CD4-positive, alpha-beta T cell (primary cell): ENCODE measurements at regions of chr2 and their contacts with region 1.

Region 1: GRCh38 chr2:206392118-206392517 is 51.2 kb upstream of the ADAM23 start:
- DNase-seq: peak in 4 of 14 experiments; percentile 7 to 48 (median 24)
- ATAC-seq: no peak
- H3K4me3 ChIP-seq: no peak overlapping the region
- H3K4me3 Mint-ChIP-seq: no peak overlapping the region
- H3K27ac ChIP-seq: no peak overlapping the region
- H3K27ac Mint-ChIP-seq: no peak overlapping the region
- H3K4me1 ChIP-seq: no peaks in the 10 kb centered on the region
- H3K4me1 Mint-ChIP-seq: no peaks in the 10 kb centered on the region
- H3K27me3 ChIP-seq: no peaks in the 10 kb centered on the region
- H3K27me3 Mint-ChIP-seq: no peaks in the 10 kb centered on the region
- CTCF ChIP-seq: peak; percentile 19

Region 2: GRCh38 chr2:206143451-206143850 is 248.7 kb before region 1 on chr2:
- CTCF ChIA-PET with region 1: no interaction called
- POLR2A ChIA-PET with region 1: no interaction called
- intact Hi-C with region 1: no loop called
- DNase-seq: no peak
- ATAC-seq: no peak
- H3K4me3 ChIP-seq: no peak overlapping the region
- H3K4me3 Mint-ChIP-seq: no peak overlapping the region
- H3K27ac ChIP-seq: no peak overlapping the region
- H3K27ac Mint-ChIP-seq: no peak overlapping the region
- H3K4me1 ChIP-seq: no peaks in the 10 kb centered on the region
- H3K4me1 Mint-ChIP-seq: no peaks in the 10 kb centered on the region
- H3K27me3 ChIP-seq: no peaks in the 10 kb centered on the region
- H3K27me3 Mint-ChIP-seq: no peaks in the 10 kb centered on the region
- CTCF ChIP-seq: no peak

Region 3: DNA sequence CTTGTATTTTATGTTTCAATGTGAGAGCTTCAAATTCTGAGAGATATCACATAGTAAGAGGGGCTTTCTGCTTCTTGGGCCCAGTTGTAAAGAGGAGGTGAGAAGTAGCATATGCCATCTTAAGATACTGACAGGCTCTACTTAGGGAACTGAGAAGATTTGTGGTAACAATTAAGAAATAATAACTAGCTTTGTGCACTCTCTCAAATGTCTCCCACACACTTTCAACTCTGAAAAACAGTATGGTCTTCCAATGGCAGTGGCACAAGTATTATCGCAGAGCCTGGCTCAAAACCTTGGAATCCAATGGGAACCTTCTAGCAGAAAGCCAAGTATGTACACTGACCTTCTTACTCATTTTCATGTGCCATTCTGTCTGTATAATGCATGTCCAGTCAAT is 169.8 kb after region 1 on chr2:
- CTCF ChIA-PET with region 1: no interaction called
- POLR2A ChIA-PET with region 1: no interaction called
- intact Hi-C with region 1: loop called (anchors 2 to 5 kb)
- DNase-seq: no peak
- ATAC-seq: no peak
- H3K4me3 ChIP-seq: no peak overlapping the region
- H3K4me3 Mint-ChIP-seq: no peak overlapping the region
- H3K27ac ChIP-seq: no peak overlapping the region
- H3K27ac Mint-ChIP-seq: no peak overlapping the region
- H3K4me1 ChIP-seq: peaks cover 5% of the 10 kb centered on the region
- H3K4me1 Mint-ChIP-seq: peaks cover 32% of the 10 kb centered on the region
- H3K27me3 ChIP-seq: no peaks in the 10 kb centered on the region
- H3K27me3 Mint-ChIP-seq: no peaks in the 10 kb centered on the region
- CTCF ChIP-seq: no peak

Region 4: DNA sequence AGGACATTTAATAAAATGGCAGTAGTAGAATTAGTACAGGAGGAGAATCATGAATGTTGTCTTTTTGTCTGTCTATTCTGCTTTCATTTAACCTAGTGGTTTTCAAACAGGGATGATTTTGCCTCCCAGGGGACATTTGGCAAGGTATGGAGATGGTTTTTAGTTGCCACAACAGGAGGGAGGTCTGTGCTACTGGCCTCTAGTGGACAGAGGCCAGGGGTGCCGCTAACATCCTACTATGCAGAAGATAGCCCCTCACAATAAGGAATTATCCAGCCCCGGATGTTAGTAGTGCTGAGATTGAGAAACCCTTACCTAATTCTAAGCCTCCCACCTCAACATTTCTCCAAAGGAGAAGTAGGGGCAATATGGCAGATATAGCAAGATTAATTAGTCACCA is 391.6 kb after region 1 on chr2:
- CTCF ChIA-PET with region 1: no interaction called
- POLR2A ChIA-PET with region 1: no interaction called
- intact Hi-C with region 1: loop called in 1 of 2 experiments (anchors 5 kb)
- DNase-seq: no peak
- ATAC-seq: no peak
- H3K4me3 ChIP-seq: no peak overlapping the region
- H3K4me3 Mint-ChIP-seq: no peak overlapping the region
- H3K27ac ChIP-seq: no peak overlapping the region
- H3K27ac Mint-ChIP-seq: no peak overlapping the region
- H3K4me1 ChIP-seq: no peaks in the 10 kb centered on the region
- H3K4me1 Mint-ChIP-seq: peaks cover 25% of the 10 kb centered on the region
- H3K27me3 ChIP-seq: no peaks in the 10 kb centered on the region
- H3K27me3 Mint-ChIP-seq: no peaks in the 10 kb centered on the region
- CTCF ChIP-seq: peak; percentile 23